ENCODE measurements at regions of chr9 and their contacts with region 1.

Region 1: DNA sequence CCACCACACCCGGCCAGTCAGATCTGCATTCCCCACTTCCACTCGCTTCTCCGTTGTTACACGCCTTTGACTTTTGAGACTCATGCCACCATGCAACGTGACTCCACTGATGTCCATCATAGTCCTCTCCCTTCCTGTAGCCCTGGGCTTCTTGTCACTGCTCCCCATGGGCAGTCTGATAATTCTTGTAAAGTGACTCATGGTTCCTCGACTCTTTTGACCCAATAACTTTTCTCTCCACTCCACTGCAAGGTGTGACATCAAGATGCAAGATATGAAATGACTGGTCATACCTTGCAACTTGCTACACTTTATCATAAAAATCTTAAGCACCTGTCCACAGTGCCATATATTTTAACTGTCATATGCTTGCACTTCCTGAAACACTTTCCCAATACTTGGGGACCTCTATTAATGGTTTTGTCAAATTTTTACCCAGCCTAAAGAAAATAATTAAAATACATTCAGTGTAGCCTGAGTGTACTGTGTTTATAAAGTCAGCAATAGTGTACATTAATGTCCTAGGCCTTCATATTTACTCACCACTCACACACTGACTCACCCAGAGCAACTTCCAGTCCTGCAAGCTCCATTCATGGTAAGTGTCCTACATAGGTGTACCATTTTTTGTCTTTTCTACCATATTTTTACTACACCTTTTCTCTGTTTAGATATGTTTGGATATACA is 18.6 kb upstream of the ANKRD18A start:
- DNase-seq: no peak
- H3K4me3 ChIP-seq: no peak overlapping the region
- H3K27ac ChIP-seq: no peak overlapping the region
- H3K4me1 ChIP-seq: no peaks in the 10 kb centered on the region
- H3K27me3 ChIP-seq: peaks cover 6% of the 10 kb centered on the region; the same call in 1 of the 2 replicates

Region 2: GRCh38 chr9:38486056-38486615 is 152.9 kb before region 1 on chr9:
- in situ Hi-C with region 1: no loop called
- DNase-seq: no peak
- H3K4me3 ChIP-seq: no peak overlapping the region
- H3K27ac ChIP-seq: no peak overlapping the region
- H3K4me1 ChIP-seq: no peaks in the 10 kb centered on the region
- H3K27me3 ChIP-seq: peaks cover 14% of the 10 kb centered on the region

Region 3: DNA sequence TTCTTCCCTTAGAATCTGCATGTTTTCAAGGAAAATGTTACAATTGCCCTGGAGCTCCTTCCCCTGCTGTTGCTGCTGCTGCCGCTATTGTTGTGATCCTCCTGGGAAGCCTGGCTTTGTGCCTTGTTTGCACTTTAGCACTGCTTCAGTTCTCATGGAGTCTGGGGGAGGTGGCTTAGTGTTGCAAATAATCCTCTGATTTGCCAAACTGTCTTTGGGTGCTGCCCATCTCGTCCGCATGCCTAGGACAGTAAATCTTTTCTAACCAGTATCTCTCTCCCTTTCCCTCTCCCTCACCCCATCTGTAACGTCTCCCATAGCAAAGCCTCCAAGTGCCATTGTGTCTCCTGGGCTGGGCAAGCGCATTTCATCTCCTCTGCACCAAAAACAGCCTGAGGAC is 50.6 kb after region 1 on chr9:
- in situ Hi-C with region 1: loop called (anchors 10 kb)
- DNase-seq: no peak
- H3K4me3 ChIP-seq: no peak overlapping the region
- H3K27ac ChIP-seq: no peak overlapping the region
- H3K4me1 ChIP-seq: no peaks in the 10 kb centered on the region
- H3K27me3 ChIP-seq: no peaks in the 10 kb centered on the region; the same call in 1 of the 2 replicates

Region 4: GRCh38 chr9:38705917-38706316 is 66.9 kb after region 1 on chr9:
- in situ Hi-C with region 1: no loop called
- DNase-seq: no peak
- H3K4me3 ChIP-seq: no peak overlapping the region
- H3K27ac ChIP-seq: no peak overlapping the region
- H3K4me1 ChIP-seq: no peaks in the 10 kb centered on the region
- H3K27me3 ChIP-seq: no peaks in the 10 kb centered on the region